B cell (primary cell): ENCODE measurements at regions of chr2 and their contacts with region 1.

Region 1: DNA sequence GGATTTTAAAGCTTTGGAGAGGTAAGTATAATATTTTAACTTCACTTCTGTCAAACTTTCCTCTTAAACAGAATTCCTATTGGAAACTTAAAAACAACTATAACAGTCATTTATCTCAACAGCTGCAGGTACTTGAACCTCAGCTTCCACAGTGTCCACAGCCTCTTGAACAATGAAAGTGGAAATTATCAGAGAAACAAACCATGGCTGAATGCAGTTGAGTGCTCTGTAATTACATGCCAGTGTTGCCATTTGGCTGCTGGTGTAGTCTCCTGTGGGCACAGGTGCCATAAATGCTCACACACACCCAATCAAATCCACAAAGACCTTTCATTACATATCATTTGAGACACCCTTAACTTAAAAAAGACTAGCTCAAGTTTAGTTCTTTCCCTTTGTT is 125.1 kb downstream of the CPS1 start:
- DNase-seq: no peak
- ATAC-seq: no peak
- H3K4me3 ChIP-seq: no peak overlapping the region
- H3K4me3 Mint-ChIP-seq: no peak overlapping the region
- H3K27ac ChIP-seq: no peak overlapping the region
- H3K27ac Mint-ChIP-seq: no peak overlapping the region
- H3K4me1 ChIP-seq: no peaks in the 10 kb centered on the region
- H3K4me1 Mint-ChIP-seq: no peaks in the 10 kb centered on the region
- H3K27me3 ChIP-seq: no peaks in the 10 kb centered on the region
- H3K27me3 Mint-ChIP-seq: no peaks in the 10 kb centered on the region
- CTCF ChIP-seq: no peak

Region 2: DNA sequence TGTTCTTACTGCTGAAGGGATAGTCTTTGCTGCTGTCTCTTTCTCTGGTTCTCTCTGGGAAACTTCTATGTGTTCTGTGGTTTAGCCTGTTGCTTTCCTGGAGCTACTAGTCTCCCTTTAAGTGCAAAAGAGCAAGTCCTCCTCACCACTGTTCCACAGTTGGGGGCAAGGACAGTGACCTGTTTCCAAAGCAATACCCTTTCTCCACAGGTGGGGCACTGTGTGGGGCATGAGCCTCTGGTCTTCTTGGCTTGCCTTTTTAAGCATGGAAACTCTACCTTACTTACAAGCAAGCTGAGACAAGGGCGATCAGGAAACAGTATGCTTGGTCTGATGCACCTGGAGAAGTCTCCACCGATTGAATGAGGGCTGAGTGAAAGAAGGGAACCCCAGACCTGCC is 31.6 kb after region 1 on chr2:
- CTCF ChIA-PET with region 1: no interaction called
- POLR2A ChIA-PET with region 1: no interaction called
- intact Hi-C with region 1: loop called (anchors 1 kb)
- DNase-seq: no peak
- ATAC-seq: no peak
- H3K4me3 ChIP-seq: no peak overlapping the region
- H3K4me3 Mint-ChIP-seq: no peak overlapping the region
- H3K27ac ChIP-seq: no peak overlapping the region
- H3K27ac Mint-ChIP-seq: no peak overlapping the region
- H3K4me1 ChIP-seq: no peaks in the 10 kb centered on the region
- H3K4me1 Mint-ChIP-seq: no peaks in the 10 kb centered on the region
- H3K27me3 ChIP-seq: no peaks in the 10 kb centered on the region
- H3K27me3 Mint-ChIP-seq: no peaks in the 10 kb centered on the region
- CTCF ChIP-seq: no peak